ENCODE measurements at regions of chr1 and their contacts with region 1.

Region 1: DNA sequence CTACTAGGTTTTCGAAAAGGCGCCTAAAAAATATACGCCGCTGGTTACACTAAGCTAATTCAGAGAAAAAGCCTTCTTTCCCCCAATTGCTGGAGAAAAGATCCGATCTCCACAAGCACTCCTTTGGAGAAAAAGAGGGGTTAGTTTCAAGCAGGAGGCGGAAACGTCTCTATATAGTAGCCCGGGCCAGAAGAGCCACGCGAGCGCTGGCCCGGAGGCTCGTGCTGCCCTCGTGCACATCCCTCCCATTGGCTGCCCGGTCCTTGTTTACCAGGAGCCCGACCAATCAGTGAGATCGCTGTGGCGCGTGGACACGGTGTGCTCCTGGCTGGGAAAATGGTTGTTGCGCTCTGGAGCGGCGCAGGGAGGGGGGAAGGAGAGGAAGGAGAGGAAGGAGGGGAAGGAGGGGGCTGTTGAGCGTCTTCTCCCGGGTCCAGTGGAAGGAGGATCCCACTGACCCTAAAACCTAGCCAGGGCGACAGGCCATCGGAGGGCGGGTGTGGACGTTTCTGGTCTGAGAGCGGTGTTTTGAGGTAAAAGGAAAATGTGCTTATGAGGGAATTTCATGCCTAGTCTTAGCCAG is at the start of gene TXNIP:
- DNase-seq: peak; percentile 97
- H3K4me3 ChIP-seq: peak within 1 kb of the TSS; percentile 97 to 98 (median 98)
- H3K27ac ChIP-seq: peak within 1 kb of the TSS; percentile 4
- H3K4me1 ChIP-seq: peaks cover 19% of the 10 kb centered on the region
- H3K27me3 ChIP-seq: no peaks in the 10 kb centered on the region
- CTCF ChIP-seq: no peak
- POLR2A ChIP-seq: peak; percentile 77
- total RNA-seq, gene TXNIP: 7.6 and 9.1 TPM in 2 replicates

Region 2: DNA sequence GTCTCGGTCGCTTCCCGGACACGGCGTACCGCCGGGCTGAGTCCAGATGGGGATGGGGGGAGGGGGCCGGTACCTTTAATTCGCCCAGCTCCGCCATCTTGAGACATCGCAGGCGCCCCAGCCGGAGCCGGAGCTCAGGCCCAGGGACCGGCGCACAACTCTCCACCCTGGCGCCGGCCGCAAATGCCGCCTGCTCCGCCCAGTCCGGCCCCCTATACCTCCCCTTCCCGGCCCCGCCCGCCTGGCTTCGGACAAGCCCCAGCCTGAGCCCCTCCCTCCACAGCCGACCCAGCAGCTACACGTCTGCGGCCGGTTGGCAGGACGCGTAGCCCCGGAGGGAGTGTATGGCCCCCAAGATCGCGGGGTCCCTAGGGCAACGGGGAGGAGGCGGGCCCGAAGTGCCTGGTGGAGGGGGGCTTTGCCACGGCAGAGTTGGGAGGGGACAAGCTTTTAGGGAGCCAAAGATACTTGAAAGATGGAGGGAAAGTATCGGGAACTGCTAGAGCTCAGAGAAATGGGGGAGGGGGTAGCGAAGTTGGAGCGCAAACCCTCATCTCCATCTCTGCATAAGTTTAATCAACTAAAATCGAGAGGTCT is 137.5 kb before region 1 on chr1 and contains the start of gene PIAS3:
- CTCF ChIA-PET with region 1: no interaction called
- POLR2A ChIA-PET with region 1: no interaction called
- dilution Hi-C with region 1: no loop called
- intact Hi-C with region 1: no loop called
- DNase-seq: peak; percentile 97
- H3K4me3 ChIP-seq: peak within 1 kb of the TSS; percentile 64 to 78 (median 71)
- H3K27ac ChIP-seq: peak within 1 kb of the TSS; percentile 43
- H3K4me1 ChIP-seq: peaks cover 7% of the 10 kb centered on the region
- H3K27me3 ChIP-seq: peaks cover 2 to 4% of the 10 kb centered on the region in 2 experiments
- CTCF ChIP-seq: no peak
- POLR2A ChIP-seq: no peak
- total RNA-seq, gene PIAS3: 50.1 and 53.3 TPM in 2 replicates

Region 3: GRCh38 chr1:145963995-145964901 is 32.3 kb before region 1 on chr1 and contains the starts of genes ANKRD34A and POLR3GL:
- CTCF ChIA-PET with region 1: no interaction called
- POLR2A ChIA-PET with region 1: no interaction called
- dilution Hi-C with region 1: no loop called
- intact Hi-C with region 1: loop called (anchors 1 kb)
- DNase-seq: peak; percentile 96
- H3K4me3 ChIP-seq: peak within 1 kb of the TSS; percentile 38 to 77 (median 60)
- H3K27ac ChIP-seq: peak within 1 kb of the TSS; percentile 43
- H3K4me1 ChIP-seq: peaks cover 34% of the 10 kb centered on the region
- H3K27me3 ChIP-seq: no peaks in the 10 kb centered on the region
- CTCF ChIP-seq: no peak
- POLR2A ChIP-seq: peak; percentile 82
- total RNA-seq, gene ANKRD34A: 0.24 and 0.60 TPM in 2 replicates
- total RNA-seq, gene POLR3GL: 15.3 and 18.8 TPM in 2 replicates